Tibial artery (tissue), 4 donors: ENCODE measurements at regions of chr9 and their contacts with region 1.

Region 1: DNA sequence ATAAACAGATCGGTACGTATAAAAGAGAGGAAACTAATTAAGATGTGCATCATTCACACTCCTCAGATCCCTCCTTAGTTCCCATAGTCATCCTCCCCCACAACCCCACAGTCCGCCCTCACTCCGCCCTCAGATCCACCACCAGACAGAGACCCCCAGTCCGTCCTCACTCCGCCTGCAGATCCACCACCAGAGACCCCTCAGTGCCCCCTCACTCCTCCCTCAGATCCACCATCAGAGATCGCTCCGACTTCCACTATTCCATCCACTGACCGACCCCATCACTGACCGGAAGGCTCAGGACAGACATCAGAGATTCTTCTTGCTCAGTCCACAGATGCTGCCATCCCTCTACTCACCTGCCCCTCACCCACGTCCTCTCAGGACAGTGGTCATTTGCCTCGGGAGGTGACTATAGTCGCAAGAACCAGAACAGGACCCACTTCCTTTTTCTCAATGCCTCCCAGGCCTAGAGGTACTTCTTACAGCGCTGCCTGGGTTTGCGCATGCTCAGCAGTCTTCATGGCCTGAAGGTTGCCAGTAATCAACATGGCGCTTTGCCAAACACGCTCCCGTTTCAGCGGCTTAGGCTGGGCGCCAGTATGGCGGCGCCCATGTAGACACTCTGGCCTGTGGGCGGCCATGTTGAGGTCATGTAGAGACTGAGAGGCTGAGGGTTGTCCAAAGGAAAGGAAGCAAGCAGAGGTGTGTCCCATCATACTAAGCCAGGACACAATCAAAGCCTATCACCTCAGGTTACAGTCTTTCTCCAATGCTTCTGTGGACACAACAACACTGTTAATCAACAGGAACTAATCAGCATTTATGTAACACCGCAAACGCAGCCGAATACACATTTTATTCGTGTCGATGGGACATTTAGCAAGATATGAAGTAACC is at the start of gene ZNF484:
- DNase-seq: peak; percentile 97 to 98
- H3K4me3 ChIP-seq: peak within 1 kb of the TSS; percentile 70 to 73
- H3K27ac ChIP-seq: peak within 1 kb of the TSS; percentile 66 to 85
- H3K4me1 ChIP-seq: peaks cover 0 to 19% (median 6%) of the 10 kb centered on the region in 4 donors
- H3K27me3 ChIP-seq: no peaks in the 10 kb centered on the region
- CTCF ChIP-seq: no peak

Region 2: DNA sequence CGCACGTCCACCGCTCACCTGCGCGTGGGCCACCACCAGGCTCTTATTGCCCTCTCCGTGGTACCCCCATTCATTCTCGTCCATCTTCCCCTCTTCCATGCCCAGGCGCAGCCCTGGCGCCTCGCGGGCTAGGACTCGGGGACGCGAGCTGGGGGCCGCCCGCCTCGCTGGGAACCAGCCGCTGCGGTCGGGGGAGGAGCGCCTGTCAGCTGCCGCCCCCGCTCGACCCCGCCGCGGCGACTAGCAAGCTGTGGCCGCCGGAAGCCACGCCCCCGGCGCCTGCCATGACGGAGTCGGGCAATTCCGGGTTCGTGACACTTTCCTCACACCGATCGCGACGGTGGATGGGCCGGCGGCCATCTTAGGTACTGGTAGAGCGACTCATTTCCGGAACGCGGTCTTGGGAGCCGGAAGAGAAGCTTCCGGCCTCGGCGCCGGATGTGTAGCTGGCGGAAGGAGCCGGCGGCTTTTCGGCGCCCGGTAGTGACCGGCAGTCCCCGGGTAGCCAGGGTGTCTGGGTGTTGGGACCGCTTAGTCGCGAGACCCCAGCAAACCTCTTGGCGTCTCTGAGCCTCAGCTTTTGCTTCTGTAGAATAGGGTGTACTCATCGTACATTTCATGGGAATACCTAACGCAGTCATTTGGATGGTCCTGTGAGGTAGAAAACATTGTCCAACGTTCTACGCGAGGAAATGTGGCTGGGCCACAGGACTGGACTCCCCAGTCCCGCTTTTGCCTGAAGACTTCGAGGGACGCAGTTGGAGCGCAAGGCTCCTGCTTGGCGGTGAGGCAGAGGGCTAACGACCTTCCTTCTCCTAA is 207.7 kb before region 1 on chr9 and contains the start of gene IPPK:
- intact Hi-C with region 1: loop called (anchors 5 kb)
- DNase-seq: peak; percentile 98 to 99
- H3K4me3 ChIP-seq: peak within 1 kb of the TSS; percentile 91
- H3K27ac ChIP-seq: peak within 1 kb of the TSS; percentile 86 to 90
- H3K4me1 ChIP-seq: peaks cover 0 to 46% (median 19%) of the 10 kb centered on the region in 4 donors
- H3K27me3 ChIP-seq: no peaks in the 10 kb centered on the region
- CTCF ChIP-seq: peak in 1 of 2 experiments; percentile 19